ENCODE measurements at regions of chr5 and their contacts with region 1.

Region 1: GRCh38 chr5:91110686-91111085 is 272.4 kb downstream of the ARRDC3 start:
- DNase-seq: no peak
- H3K4me3 ChIP-seq: no peak overlapping the region
- H3K4me1 ChIP-seq: no peaks in the 10 kb centered on the region
- H3K27me3 ChIP-seq: no peaks in the 10 kb centered on the region

Region 2: DNA sequence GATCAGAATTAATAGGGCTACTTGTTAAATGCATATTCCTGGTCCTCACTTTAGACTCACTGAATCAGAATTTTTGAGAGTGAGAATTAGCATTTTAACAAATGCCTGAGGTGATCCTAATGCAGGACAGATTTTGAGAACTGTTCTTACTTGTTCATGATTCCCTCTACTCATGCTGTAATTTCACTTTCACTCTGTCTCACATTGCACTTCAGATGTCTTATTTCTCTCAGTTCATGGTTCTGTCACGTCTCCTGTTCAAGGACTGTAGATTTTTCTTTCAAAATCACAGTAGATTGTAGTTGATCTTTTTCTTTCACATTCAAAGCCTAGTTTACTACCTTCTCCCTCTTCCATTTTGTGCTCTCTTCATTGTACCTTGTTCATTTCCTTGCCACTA is 497.8 kb before region 1 on chr5:
- in situ Hi-C with region 1: no loop called
- DNase-seq: no peak
- H3K4me3 ChIP-seq: no peak overlapping the region
- H3K4me1 ChIP-seq: peaks cover 44% of the 10 kb centered on the region
- H3K27me3 ChIP-seq: no peaks in the 10 kb centered on the region

Region 3: DNA sequence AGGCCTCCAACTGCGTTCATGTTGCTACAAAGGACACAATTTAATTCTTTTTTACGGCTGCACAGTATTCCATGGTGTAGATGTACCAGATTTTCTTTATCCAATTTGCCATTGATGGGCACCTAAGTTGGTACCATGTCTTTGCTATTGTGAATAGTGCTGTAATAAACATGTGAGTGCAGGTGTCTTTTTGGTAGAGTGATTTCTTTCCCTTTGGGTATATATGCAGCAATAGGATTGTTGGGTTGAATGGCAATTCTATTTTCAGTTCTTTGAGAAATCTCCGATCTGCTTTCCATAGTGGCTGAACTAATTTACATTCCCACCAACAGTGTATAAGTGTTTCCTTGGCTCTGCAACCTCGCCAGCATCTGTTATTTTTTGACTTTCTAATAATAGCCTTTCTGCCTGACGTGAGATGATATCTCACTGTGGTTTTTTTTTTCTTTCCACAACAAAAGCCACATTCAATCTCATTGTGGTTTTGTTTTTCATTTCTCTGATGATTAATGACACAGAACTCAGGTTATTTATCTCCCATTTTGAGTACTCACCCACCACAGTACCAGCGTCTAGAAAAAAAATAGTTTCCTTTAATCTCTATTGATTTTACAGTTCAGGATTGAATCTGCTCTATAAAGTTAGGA is 250.5 kb after region 1 on chr5:
- in situ Hi-C with region 1: loop called (anchors 10 kb)
- DNase-seq: no peak
- H3K4me3 ChIP-seq: no peak overlapping the region
- H3K4me1 ChIP-seq: peaks cover 5% of the 10 kb centered on the region; the same call in 1 of the 2 replicates
- H3K27me3 ChIP-seq: no peaks in the 10 kb centered on the region

Region 4: GRCh38 chr5:91706785-91707520 is 596.3 kb after region 1 on chr5:
- in situ Hi-C with region 1: no loop called
- DNase-seq: no peak
- H3K4me3 ChIP-seq: no peak overlapping the region
- H3K4me1 ChIP-seq: no peaks in the 10 kb centered on the region
- H3K27me3 ChIP-seq: no peaks in the 10 kb centered on the region